Right cardiac atrium (tissue), 5 donors: ENCODE measurements at regions of chr10 and their contacts with region 1.

Region 1: GRCh38 chr10:111756217-111757061 is 427.1 kb downstream of the GPAM start:
- DNase-seq: peak; percentile 13 to 47 (median 28)
- ATAC-seq: no peak
- H3K4me3 ChIP-seq: no peak overlapping the region
- H3K27ac ChIP-seq: no peak overlapping the region
- H3K4me1 ChIP-seq: no peaks in the 10 kb centered on the region
- H3K27me3 ChIP-seq: no peaks in the 10 kb centered on the region

Region 2: DNA sequence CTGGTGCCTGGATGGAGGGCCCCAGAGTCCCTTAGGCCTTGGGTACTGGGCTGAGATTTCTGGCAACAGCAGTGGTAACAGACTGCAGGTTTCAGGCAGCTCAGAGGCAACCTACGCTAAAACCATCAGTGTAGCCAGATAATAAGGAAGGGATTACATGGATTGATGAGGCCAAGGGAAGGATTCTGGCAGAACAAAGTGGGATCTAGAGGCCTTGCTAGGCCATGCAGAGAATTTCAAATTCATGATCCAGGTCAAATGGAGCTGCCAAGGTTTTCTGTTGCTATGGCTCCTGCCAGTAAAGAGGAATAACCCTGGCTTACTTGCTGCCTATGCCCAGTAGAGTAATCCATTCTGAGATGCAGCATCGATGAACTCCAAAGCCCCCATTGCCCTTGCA is 233.9 kb before region 1 on chr10:
- intact Hi-C with region 1: no loop called
- DNase-seq: no peak
- ATAC-seq: no peak
- H3K4me3 ChIP-seq: no peak overlapping the region
- H3K27ac ChIP-seq: no peak overlapping the region
- H3K4me1 ChIP-seq: no peaks in the 10 kb centered on the region
- H3K27me3 ChIP-seq: no peaks in the 10 kb centered on the region

Region 3: DNA sequence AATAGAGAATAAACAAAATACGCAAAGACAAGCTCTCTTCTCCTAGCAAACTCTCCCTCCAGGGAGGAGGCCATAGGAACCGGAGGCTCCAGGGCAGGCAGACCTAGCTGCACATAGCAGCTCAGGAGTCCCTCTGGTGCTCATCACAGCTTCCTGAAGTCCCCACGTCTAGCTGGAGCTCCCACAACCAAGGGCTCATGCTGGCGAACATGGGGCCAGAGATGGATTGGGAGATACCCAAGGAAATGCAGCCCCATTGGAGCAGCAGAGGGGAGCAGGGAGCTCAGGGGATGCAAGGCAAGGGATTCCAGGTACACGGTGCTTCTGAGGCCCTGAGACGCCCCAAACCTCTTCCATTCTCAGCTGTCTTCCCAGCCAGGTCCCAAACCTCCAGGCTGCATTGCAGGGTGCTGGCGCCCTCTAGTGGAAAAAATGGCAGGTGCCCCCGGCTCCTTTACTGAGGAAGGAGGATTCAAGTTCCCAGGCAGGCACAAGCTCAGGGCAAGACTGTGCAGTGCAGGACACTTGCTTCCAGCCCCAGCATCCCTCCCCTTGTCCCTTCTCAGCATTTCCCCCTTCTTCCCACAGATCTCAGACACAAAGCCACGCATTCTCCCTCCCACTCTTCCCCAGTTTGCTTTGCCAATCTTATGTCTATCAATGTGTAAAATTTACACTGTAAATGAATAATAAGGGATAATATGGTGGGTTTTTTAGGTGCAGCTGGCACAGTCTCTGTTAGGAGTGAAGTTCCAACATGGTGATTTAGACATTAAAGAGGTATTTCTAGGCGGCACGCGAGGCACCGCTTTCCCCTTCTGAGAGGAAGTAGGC is 380.9 kb after region 1 on chr10:
- intact Hi-C with region 1: loop called in 1 of 4 experiments (anchors 5 kb)
- DNase-seq: peak; percentile 67 to 87 (median 85)
- ATAC-seq: peak; percentile 63 to 75
- H3K4me3 ChIP-seq: no peak overlapping the region
- H3K27ac ChIP-seq: no peak overlapping the region
- H3K4me1 ChIP-seq: no peaks in the 10 kb centered on the region
- H3K27me3 ChIP-seq: no peaks in the 10 kb centered on the region